Activated CD4-positive, alpha-beta T cell treated with anti-CD3 and anti-CD28 coated beads, Interleukin-2, amount 10 ng/mL, durations not matched to agents 7 days and 5 days (primary cell): ENCODE measurements at regions of chr13 and their contacts with region 1.

Region 1: GRCh38 chr13:30158774-30159445 is 148.4 kb downstream of the KATNAL1 start:
- DNase-seq: peak; percentile 43
- H3K4me3 Mint-ChIP-seq: no peak overlapping the region
- H3K27ac Mint-ChIP-seq: peak overlapping the region; percentile 47
- H3K4me1 Mint-ChIP-seq: peaks cover 52% of the 10 kb centered on the region
- H3K27me3 Mint-ChIP-seq: no peaks in the 10 kb centered on the region

Region 2: DNA sequence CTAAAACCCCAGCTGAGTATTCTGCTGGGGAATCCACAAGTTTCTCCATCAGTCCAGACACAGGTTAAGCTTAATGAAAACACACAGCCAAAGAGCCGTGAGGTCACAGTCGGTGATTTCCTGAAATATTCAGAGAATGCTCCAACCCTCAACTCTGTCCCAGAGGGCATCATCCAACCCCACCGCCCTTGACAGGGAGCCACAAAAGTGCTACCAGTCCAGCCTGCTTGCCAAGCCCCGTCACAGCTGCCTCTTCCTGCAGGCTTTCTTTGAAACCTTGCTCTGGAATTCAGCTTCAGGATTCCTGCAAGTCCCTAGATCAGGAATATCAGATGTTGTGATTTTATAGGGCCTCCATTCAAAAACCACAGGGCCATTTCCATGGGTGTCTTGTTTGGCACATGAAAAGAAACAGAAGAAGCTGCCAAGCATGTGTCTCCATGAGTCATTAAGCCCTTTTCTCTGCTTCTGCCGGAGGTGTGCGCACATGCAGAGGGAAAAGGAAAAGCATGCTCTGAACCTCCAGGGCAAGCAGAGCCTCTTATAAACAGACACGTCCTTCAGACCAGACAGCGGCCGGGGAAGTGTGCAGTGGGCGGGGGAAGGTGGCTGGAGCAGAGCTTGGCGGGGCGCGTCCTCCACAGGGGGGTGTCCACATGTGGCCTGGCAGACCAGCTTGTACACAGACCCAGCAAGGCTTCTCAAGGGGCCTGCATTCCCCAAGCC is 16.3 kb before region 1 on chr13:
- CTCF ChIA-PET with region 1: interaction called, 55 read pairs
- POLR2A ChIA-PET with region 1: interaction called, 3 read pairs
- DNase-seq: no peak
- H3K4me3 Mint-ChIP-seq: no peak overlapping the region
- H3K27ac Mint-ChIP-seq: peak overlapping the region; percentile 81
- H3K4me1 Mint-ChIP-seq: peaks cover 60% of the 10 kb centered on the region
- H3K27me3 Mint-ChIP-seq: no peaks in the 10 kb centered on the region